Activated CD4-positive, alpha-beta memory T cell treated with anti-CD3 and anti-CD28 coated beads for 36 hours (primary cell): ENCODE measurements at regions of chr4 and their contacts with region 1.

Region 1: GRCh38 chr4:145936142-145936996 is 2.3 kb downstream of the ZNF827 start:
- DNase-seq: peak; percentile 72
- H3K4me3 Mint-ChIP-seq: peak overlapping the region; percentile 90
- H3K27ac Mint-ChIP-seq: peak overlapping the region; percentile 97
- H3K4me1 Mint-ChIP-seq: peaks cover 43% of the 10 kb centered on the region
- H3K27me3 Mint-ChIP-seq: peaks cover 1% of the 10 kb centered on the region

Region 2: GRCh38 chr4:145097821-145098674 is 838.3 kb before region 1 on chr4 and contains the starts of genes ABCE1 and ANAPC10:
- CTCF ChIA-PET with region 1: no interaction called
- POLR2A ChIA-PET with region 1: no interaction called
- intact Hi-C with region 1: loop called (anchors 5 kb)
- DNase-seq: peak; percentile 97
- H3K4me3 Mint-ChIP-seq: peak within 1 kb of the TSS; percentile 87
- H3K27ac Mint-ChIP-seq: peak within 1 kb of the TSS; percentile 97
- H3K4me1 Mint-ChIP-seq: peaks cover 20% of the 10 kb centered on the region
- H3K27me3 Mint-ChIP-seq: no peaks in the 10 kb centered on the region
- total RNA-seq, gene ABCE1: 138 to 145 TPM
- total RNA-seq, gene ANAPC10: 28.2 to 28.3 TPM

Region 3: DNA sequence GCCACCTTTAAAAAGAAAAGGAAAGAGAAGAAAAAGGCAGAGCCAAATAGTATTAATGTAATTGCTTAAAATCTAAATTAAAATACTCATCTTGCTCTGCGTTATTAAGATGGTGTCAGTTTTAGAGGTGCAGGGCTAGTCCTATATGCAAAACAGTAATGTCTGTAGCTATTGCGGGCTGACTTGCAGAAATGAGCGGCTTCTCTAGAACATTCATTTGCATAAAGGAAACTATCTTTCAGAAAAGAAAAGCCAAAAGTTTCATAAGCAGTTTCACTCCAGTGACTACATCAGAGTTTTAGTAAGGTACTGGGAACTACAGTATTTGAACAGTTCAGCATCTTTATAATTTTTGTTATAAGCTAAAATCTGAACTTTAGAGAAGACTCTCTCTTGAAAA is 448.7 kb before region 1 on chr4:
- CTCF ChIA-PET with region 1: no interaction called
- POLR2A ChIA-PET with region 1: no interaction called
- intact Hi-C with region 1: loop called (anchors 5 kb)
- DNase-seq: peak; percentile 44
- H3K4me3 Mint-ChIP-seq: no peak overlapping the region
- H3K27ac Mint-ChIP-seq: no peak overlapping the region
- H3K4me1 Mint-ChIP-seq: peaks cover 8% of the 10 kb centered on the region
- H3K27me3 Mint-ChIP-seq: peaks cover 19% of the 10 kb centered on the region

Region 4: DNA sequence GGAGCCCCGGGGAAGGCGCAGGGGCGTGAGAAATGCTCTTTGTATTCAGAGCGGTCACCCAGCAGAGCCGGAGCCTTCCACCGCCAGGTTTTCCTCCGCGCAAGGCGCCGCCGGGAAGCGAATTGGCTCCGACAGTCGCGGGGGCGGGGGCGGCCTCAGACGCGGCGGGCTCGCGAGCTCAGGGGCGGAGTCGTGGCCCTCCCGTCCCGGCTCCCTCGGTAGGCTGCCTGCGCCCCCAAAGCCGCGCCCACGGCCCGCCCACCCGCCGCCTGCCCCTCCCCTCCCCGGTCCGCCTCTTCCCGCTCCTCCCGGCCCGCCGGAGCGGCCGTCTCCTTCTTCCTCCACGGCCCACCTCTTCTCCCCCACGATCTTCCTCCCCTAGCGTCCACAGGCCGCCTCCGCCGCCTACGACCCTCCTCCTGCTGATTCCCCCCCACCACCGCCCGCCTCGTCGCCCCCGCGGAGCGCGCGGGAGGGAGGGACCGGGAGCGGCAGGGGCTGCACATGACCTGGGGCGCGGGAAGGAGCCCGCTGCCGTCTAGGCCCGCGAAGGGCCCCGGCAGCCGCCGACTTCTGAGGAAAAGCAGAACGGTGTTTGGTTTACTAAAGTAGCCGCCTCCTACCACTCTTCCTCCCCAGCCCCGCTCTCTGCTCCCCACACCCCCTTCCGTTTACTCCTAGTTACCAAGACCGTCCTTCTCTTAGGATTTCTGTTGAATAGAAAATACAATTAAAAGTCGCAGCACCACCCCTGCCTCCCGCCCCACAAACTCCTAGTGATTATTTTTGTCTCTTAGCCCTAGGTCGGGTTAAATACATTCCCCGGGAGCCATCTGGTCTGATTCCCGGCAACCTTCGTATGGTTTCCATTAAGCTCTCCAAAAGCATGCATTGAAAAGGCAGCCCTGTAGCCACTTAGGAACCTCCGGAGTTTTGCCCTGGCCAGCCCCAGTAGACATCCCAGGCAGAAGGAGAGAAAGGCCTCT is 203.2 kb before region 1 on chr4:
- CTCF ChIA-PET with region 1: no interaction called
- POLR2A ChIA-PET with region 1: no interaction called
- intact Hi-C with region 1: loop called (anchors 2 kb)
- DNase-seq: peak; percentile 92
- H3K4me3 Mint-ChIP-seq: peak overlapping the region; percentile 69
- H3K27ac Mint-ChIP-seq: peak overlapping the region; percentile 62
- H3K4me1 Mint-ChIP-seq: peaks cover 29% of the 10 kb centered on the region
- H3K27me3 Mint-ChIP-seq: peaks cover 6% of the 10 kb centered on the region

Region 5: DNA sequence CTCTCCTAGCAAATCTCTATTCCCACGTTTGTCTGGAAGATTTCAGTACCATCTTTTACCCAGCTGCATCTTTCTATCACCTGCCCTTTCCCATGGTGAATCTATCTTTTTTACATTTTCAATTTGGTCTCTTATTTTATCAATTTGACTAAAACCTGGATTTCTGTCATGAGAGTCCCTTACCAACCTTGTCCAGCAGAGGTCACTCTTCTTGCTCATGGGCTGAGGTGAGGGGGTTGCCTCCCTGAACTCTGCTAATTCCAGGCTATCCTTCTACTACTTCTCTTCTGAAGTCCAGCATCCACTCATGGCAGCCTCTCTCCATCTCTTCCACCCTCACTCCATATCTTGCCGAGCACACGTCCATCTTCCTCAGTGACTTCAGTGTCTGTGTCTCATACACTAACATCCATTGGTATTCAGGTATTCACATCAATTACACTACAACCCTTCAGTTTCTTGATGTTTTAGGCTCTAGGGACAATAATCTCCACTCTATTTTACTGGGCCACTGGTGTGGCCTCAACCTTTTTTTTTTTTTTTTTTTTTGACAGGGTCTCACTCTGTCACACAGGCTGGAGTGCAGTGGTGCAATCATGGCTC is 20.0 kb after region 1 on chr4:
- CTCF ChIA-PET with region 1: interaction called, 8 read pairs
- POLR2A ChIA-PET with region 1: no interaction called
- intact Hi-C with region 1: loop called (anchors 2 kb)
- DNase-seq: peak; percentile 17
- H3K4me3 Mint-ChIP-seq: no peak overlapping the region
- H3K27ac Mint-ChIP-seq: no peak overlapping the region
- H3K4me1 Mint-ChIP-seq: peaks cover 4% of the 10 kb centered on the region
- H3K27me3 Mint-ChIP-seq: peaks cover 9% of the 10 kb centered on the region

Region 6: DNA sequence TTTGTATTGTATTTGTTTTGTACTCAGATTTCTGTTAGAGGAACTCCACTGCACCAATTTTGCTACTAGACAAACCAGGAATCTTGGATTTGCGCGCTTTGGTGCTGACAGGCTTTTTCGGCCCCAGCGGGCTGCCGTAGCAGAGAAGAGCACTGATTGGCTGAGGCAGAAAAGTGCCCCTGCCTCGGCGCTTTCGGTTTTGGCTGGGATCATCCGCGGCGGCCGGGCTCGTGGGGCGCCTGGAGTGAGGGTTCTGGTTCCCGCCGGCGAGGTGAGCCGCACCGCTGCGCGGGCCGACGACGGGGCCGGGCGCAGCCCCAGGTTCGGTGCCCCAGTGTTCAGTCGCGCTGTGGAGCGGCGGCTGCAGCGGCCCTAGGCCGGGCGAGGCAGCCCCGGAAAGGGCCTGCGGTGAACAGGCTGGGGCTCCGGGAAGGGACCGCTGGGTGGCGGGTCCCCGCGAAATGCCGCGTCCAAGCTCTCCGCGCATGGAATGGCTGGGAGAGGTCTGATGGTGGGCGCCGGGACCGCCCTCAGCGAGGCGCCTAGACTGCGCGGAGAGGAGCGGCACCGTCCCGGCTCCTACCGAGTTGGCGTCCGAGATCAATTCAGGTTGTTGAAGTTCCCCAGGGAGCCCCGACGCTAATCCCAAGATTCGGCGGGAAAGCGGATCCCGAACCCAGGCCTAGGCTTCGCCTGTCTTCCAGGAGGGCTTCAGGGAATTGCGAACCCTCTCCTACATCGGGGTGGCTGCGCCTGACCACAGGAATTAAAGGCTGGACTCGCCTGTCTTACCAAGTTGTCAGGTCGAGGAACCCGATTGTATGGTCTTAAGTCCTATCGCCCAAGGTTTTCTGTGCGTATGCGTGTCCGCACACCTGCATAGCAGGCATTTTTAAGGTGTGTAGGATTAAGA is 239.4 kb after region 1 on chr4 and contains the start of gene LSM6:
- CTCF ChIA-PET with region 1: no interaction called
- POLR2A ChIA-PET with region 1: no interaction called
- intact Hi-C with region 1: loop called (anchors 2 kb)
- DNase-seq: peak; percentile 89
- H3K4me3 Mint-ChIP-seq: peak within 1 kb of the TSS; percentile 83
- H3K27ac Mint-ChIP-seq: peak within 1 kb of the TSS; percentile 87
- H3K4me1 Mint-ChIP-seq: peaks cover 42% of the 10 kb centered on the region
- H3K27me3 Mint-ChIP-seq: no peaks in the 10 kb centered on the region
- total RNA-seq, gene LSM6: 64.2 to 65.5 TPM

Region 7: GRCh38 chr4:146243141-146243882 is 306.9 kb after region 1 on chr4:
- CTCF ChIA-PET with region 1: no interaction called
- POLR2A ChIA-PET with region 1: no interaction called
- intact Hi-C with region 1: no loop called
- DNase-seq: peak; percentile 83
- H3K4me3 Mint-ChIP-seq: peak overlapping the region; percentile 65
- H3K27ac Mint-ChIP-seq: peak overlapping the region; percentile 80
- H3K4me1 Mint-ChIP-seq: peaks cover 36% of the 10 kb centered on the region
- H3K27me3 Mint-ChIP-seq: peaks cover 2% of the 10 kb centered on the region

Region 8: DNA sequence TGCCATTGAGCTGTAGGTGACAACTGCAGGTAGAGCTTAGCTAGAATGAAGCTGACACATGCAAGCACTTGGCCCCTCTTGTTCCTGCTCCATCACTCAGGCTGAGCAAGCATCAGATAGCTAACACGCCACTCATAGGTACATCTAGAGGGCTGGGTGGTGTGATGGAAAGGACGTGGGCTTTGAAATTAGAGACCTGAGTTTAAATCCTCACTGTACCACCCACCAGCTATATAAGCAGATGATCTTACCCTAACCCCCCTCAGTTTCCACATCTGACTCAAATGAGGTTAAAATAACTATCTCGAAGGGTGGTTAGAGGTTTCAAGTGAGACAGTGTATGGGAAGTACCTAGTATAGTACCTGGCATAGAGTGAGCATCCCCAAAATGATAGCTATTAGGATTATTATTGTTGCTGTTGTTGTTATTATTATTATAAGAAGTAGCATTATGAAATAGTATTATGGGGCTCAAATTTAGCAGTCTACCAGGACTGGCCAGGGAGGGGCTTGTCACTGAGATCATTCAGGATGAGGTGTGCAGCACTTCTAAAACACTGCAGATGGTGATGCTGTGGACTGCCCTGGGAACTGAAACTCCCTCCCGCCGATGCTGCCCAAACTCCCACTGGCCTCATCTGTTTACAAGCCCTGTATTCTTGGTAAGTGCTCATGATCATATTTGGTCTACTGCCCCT is 337.0 kb after region 1 on chr4:
- CTCF ChIA-PET with region 1: no interaction called
- POLR2A ChIA-PET with region 1: no interaction called
- intact Hi-C with region 1: no loop called
- DNase-seq: peak; percentile 13
- H3K4me3 Mint-ChIP-seq: no peak overlapping the region
- H3K27ac Mint-ChIP-seq: no peak overlapping the region
- H3K4me1 Mint-ChIP-seq: peaks cover 5% of the 10 kb centered on the region
- H3K27me3 Mint-ChIP-seq: no peaks in the 10 kb centered on the region